AG04450 (cell line): ENCODE measurements at regions of chr6 and their contacts with region 1.

Region 1: DNA sequence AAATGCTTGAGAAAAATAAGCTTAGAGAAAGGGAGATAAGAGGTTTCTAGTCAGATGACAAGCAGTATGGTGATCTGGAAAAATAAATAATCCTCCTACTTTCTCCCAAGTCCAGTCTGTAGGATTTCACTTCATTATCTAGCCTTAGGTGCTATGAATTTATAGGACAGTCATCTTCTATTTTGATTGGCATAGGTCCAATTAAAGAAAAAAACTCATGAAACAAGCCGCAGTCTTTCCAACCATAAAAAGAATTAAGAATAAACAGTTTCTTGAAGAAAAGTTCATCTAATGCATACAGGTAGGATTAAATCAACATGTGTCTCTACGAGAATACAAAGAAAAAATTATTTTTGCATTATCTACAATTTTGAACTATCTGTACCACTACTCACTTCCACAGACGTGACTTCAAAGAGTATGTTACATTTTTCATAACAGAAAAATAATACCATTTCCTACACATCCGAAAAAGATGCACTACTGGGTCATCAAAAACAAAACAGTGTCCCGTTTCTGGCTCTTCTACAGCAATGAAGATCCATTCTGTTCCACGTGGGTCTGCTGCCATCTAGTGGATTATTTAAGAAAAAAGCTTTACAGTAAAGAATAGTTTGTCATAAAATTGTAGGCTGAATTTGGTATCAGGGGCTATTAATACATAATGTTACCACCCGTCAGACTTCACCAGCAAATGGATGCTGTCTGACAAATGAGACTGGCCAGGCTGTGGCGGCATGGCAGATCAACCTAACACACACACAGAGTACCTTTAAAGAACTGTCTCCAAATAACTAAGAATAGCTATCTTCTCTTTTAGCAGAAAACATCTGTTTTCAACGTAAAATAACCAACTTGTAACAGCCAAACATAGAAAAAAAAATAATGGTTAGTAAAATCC is 28.9 kb downstream of the STX7 start:
- DNase-seq: peak; percentile 37
- H3K4me3 ChIP-seq: no peak overlapping the region
- H3K27ac ChIP-seq: no peak overlapping the region
- H3K27me3 ChIP-seq: no peaks in the 10 kb centered on the region
- CTCF ChIP-seq: peak; percentile 69

Region 2: GRCh38 chr6:132465530-132466485 is 18.2 kb before region 1 on chr6:
- CTCF ChIA-PET with region 1: interaction called, 10 read pairs
- POLR2A ChIA-PET with region 1: no interaction called
- DNase-seq: no peak
- H3K4me3 ChIP-seq: no peak overlapping the region
- H3K27ac ChIP-seq: no peak overlapping the region
- H3K27me3 ChIP-seq: no peaks in the 10 kb centered on the region
- CTCF ChIP-seq: no peak

Region 3: DNA sequence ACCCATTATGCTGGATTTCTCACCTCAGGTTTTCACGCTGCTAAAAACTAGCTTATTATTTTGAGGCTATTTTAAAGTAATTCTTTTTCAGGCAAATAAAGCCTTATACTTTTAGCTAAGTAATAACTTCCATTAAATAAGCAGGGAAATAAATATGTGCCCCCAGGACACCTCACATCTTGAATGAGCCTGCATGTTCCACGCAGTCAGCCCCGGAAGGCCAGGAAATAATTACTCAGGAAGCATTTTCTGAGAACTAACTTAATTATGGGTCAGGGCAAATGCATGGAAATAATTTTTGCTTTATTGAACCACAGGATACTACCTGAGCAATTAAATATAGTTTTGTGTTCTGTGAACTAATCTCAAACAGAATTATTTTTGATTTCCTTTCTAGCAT is 12.2 kb before region 1 on chr6:
- CTCF ChIA-PET with region 1: interaction called, 10 read pairs
- POLR2A ChIA-PET with region 1: no interaction called
- DNase-seq: no peak
- H3K4me3 ChIP-seq: no peak overlapping the region
- H3K27ac ChIP-seq: no peak overlapping the region
- H3K27me3 ChIP-seq: no peaks in the 10 kb centered on the region
- CTCF ChIP-seq: no peak

Region 4: DNA sequence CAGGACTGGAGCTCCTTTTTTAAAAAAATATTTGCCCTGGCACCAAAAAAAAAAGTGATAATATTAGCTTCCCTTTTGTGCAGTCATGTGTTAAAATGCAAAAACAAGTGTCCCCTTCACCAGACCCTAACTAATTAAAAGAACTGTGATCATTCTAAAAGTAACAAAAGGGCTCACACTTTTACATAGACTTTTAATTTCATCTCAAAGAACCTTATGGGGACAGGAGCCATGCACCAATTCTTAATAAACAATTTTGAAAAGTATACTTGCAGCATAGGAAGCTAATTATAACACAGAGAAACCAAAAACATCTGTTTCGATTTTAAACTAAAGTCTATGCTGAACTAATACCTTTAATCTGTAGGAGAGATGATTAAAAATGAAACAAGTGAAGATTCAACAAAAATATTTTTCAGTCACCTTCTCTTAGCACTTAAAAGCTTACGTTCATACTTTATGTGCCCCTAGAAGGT is 11.6 kb after region 1 on chr6:
- CTCF ChIA-PET with region 1: interaction called, 19 read pairs
- POLR2A ChIA-PET with region 1: no interaction called
- DNase-seq: no peak
- H3K4me3 ChIP-seq: no peak overlapping the region
- H3K27ac ChIP-seq: no peak overlapping the region
- H3K27me3 ChIP-seq: no peaks in the 10 kb centered on the region
- CTCF ChIP-seq: no peak